Endothelial cell of umbilical vein (primary cell): ENCODE measurements at regions of chr13 and their contacts with region 1.

Region 1: DNA sequence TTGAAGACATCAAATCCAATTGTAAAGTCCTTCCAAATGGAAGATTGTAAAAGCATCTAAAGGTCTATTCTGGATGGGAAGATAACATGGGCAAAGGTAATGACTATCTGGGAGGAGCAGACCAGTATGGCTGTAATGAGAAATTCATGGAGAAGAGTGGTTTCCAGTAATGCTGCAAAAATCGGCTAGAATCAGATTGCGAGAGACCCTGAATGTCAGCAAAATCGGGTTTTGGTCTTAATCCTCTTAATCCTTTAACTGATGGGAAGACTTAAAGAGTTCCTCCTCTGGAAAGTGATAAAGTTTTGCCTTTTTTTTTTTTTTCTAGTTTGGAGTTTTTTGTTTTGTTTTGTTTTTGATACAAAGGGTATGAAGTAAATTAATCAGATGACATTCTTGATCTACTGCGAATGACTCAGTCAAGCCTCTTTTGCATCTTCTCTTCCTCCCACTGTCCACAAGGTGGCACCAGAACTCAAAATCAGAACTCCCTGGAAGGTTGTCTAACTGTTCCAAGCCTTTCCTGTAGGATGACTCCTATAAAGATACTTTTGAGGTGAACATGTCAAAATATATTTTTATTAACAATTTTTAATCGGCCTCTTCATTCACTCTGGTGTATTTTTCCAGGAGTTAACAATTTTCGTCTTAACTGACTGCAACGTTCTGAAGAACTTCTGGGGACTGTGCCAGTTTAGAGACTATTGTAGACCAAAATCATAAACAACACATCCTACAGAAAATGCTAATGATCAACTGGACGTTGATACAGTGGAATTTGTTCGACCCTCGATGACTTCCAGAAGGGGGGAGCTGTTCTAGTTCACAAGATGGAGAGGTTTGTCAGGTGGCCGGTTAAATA is 213.3 kb upstream of the MIR17HG start:
- DNase-seq: peak; percentile 63
- H3K4me3 ChIP-seq: no peak overlapping the region
- H3K27ac ChIP-seq: no peak overlapping the region
- H3K4me1 ChIP-seq: no peaks in the 10 kb centered on the region
- H3K27me3 ChIP-seq: peaks cover 0 to 2% of the 10 kb centered on the region in 2 experiments
- CTCF ChIP-seq: peak; percentile 69 to 73
- POLR2A ChIP-seq: no peak

Region 2: GRCh38 chr13:90233933-90234672 is 900.1 kb before region 1 on chr13:
- CTCF ChIA-PET with region 1: no interaction called
- POLR2A ChIA-PET with region 1: no interaction called
- dilution Hi-C with region 1: no loop called
- intact Hi-C with region 1: no loop called
- DNase-seq: no peak
- H3K4me3 ChIP-seq: no peak overlapping the region
- H3K27ac ChIP-seq: no peak overlapping the region
- H3K4me1 ChIP-seq: no peaks in the 10 kb centered on the region
- H3K27me3 ChIP-seq: no peaks in the 10 kb centered on the region
- CTCF ChIP-seq: no peak
- POLR2A ChIP-seq: no peak

Region 3: DNA sequence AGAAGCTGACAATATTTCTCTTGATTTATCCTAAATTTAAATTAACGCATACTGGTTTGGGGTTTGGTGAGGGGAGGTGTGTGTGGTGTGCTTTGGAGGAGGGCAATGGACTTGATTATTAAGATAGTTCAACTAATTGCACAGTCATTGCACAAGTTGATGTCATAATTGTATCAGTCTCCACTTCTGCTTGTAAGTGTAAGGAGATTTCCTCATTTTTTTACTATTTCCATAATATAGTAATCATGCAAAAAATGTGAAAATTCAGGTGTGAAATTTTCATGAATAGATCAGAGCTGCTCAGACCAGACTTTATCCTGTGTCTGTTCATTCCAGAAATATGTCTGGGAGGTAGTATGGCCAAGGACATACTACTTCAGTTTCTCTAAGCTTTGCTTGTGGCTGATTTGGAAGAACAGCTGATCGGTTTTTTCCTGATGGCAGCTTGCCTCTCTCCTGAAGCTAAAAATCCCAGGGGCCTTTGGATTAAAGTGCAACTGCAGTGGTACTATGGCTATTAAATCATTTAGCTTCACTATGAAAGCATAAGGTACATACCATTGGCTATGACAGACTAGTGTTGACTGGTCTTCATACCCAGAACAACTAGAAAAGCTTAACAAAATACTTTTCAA is 11.5 kb after region 1 on chr13:
- CTCF ChIA-PET with region 1: no interaction called
- POLR2A ChIA-PET with region 1: no interaction called
- dilution Hi-C with region 1: no loop called
- intact Hi-C with region 1: no loop called
- DNase-seq: no peak
- H3K4me3 ChIP-seq: no peak overlapping the region
- H3K27ac ChIP-seq: no peak overlapping the region
- H3K4me1 ChIP-seq: no peaks in the 10 kb centered on the region
- H3K27me3 ChIP-seq: no peaks in the 10 kb centered on the region
- CTCF ChIP-seq: no peak
- POLR2A ChIP-seq: no peak

Region 4: GRCh38 chr13:91185294-91185863 is 51.2 kb after region 1 on chr13:
- CTCF ChIA-PET with region 1: interaction called, 8 read pairs
- POLR2A ChIA-PET with region 1: no interaction called
- dilution Hi-C with region 1: no loop called
- intact Hi-C with region 1: loop called (anchors 1 kb)
- DNase-seq: peak; percentile 2
- H3K4me3 ChIP-seq: no peak overlapping the region
- H3K27ac ChIP-seq: no peak overlapping the region
- H3K4me1 ChIP-seq: no peaks in the 10 kb centered on the region
- H3K27me3 ChIP-seq: no peaks in the 10 kb centered on the region
- CTCF ChIP-seq: no peak
- POLR2A ChIP-seq: no peak

Region 5: DNA sequence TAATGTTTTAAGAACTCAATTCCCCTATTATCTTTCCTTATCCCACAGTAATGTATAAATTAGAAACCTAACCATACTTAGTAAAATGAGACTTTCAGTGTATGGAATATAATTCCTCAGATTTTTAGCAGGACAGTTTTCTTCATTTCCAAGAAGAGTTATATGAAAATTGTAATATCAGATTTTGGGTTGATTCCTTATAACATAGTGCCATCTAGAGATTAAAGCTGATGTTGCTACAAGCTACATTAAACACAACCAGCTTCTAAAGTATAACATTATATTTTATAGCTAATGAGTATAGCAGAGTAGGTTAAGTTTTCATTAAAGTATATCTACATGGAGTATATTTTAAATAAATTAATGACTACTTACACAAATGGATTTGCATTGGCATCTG is 113.6 kb after region 1 on chr13:
- CTCF ChIA-PET with region 1: interaction called, 47 read pairs
- POLR2A ChIA-PET with region 1: no interaction called
- dilution Hi-C with region 1: no loop called
- intact Hi-C with region 1: loop called (anchors 1 kb)
- DNase-seq: peak; percentile 33
- H3K4me3 ChIP-seq: no peak overlapping the region
- H3K27ac ChIP-seq: no peak overlapping the region
- H3K4me1 ChIP-seq: no peaks in the 10 kb centered on the region
- H3K27me3 ChIP-seq: peaks cover 0 to 4% of the 10 kb centered on the region in 2 experiments
- CTCF ChIP-seq: peak in 1 of 2 donors; percentile 4
- POLR2A ChIP-seq: no peak

Region 6: DNA sequence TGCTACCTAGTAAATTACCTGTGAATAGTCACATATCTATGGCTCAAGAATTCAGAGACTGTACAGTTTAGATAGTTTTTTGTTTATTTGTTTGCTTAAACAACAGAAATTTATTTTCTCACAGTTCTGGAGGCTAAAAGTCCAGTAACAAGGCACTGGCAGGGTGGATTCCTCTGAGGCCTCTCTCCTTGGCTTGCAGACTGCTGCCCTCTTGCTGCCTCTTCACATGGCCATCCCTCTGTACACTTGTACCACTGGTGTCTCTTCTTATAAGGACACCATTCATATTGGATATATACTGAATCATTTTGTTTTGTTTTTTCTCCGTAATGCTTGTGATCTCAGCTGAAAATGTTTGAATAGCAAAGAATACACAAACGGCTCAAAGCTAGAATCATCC is 156.9 kb after region 1 on chr13:
- CTCF ChIA-PET with region 1: no interaction called
- POLR2A ChIA-PET with region 1: no interaction called
- dilution Hi-C with region 1: no loop called
- intact Hi-C with region 1: loop called (anchors 1 kb)
- DNase-seq: no peak
- H3K4me3 ChIP-seq: no peak overlapping the region
- H3K27ac ChIP-seq: no peak overlapping the region
- H3K4me1 ChIP-seq: no peaks in the 10 kb centered on the region
- H3K27me3 ChIP-seq: peaks cover 0 to 4% of the 10 kb centered on the region in 2 experiments
- CTCF ChIP-seq: peak in 1 of 2 donors; percentile 11
- POLR2A ChIP-seq: no peak

Region 7: GRCh38 chr13:91406619-91407018 is 272.4 kb after region 1 on chr13:
- CTCF ChIA-PET with region 1: interaction called, 21 read pairs
- POLR2A ChIA-PET with region 1: no interaction called
- dilution Hi-C with region 1: no loop called
- intact Hi-C with region 1: loop called (anchors 1 kb)
- DNase-seq: peak; percentile 56
- H3K4me3 ChIP-seq: no peak overlapping the region
- H3K27ac ChIP-seq: no peak overlapping the region
- H3K4me1 ChIP-seq: no peaks in the 10 kb centered on the region
- H3K27me3 ChIP-seq: peaks cover 14 to 29% of the 10 kb centered on the region in 2 experiments
- CTCF ChIP-seq: peak; percentile 53 to 55
- POLR2A ChIP-seq: no peak

Region 8: GRCh38 chr13:91722267-91722884 is 588.2 kb after region 1 on chr13:
- CTCF ChIA-PET with region 1: interaction called, 3 read pairs
- POLR2A ChIA-PET with region 1: no interaction called
- dilution Hi-C with region 1: no loop called
- intact Hi-C with region 1: loop called (anchors 1 kb)
- DNase-seq: peak; percentile 10
- H3K4me3 ChIP-seq: no peak overlapping the region
- H3K27ac ChIP-seq: no peak overlapping the region
- H3K4me1 ChIP-seq: no peaks in the 10 kb centered on the region
- H3K27me3 ChIP-seq: no peaks in the 10 kb centered on the region
- CTCF ChIP-seq: peak; percentile 21 to 31
- POLR2A ChIP-seq: no peak